Transverse colon (tissue), 4 donors: ENCODE measurements at regions of chr14 and their contacts with region 1.

Region 1: DNA sequence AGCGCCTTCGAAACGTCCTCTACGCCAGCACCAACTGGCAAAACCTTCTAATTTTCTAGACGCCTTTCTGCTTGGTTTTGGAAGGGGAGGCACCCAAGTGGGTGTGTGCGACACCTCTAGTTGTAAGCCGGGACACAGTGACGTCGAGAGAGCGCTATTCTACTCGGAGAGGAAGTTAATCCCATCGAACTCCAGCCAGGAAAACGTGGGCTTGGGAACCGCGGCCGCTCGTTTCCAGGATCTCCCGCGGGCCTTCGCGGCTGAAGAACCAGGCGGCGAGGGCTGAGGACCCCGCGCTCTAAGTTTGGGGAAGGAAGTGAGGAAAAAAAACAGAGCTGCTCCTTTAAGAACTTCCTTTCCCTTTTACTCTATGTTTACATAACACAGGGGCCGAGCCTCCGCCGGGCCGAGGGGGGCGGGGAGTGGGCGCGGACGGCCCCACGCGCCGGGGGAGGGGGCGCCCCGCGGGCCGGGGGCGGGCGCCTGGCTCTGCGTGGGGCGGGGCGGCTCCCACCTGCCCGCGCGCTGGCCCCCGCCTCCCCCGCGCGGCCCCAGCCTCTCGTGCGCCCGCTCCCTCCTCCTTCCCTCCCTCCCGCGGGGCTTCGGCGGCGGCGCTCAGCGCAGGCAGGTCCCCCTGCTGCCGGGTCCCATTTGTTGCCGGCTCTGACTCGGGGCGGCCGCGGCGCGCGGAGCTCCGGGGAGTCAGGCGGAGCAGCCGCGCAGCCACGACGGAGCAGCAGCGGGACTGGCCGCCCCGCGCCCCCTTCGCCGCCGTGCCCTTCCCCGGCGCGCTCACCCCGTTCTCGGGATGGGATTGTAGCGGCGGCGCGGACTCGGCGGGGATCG is at the start of gene PELI2:
- DNase-seq: peak; percentile 81
- H3K4me3 ChIP-seq: peak within 1 kb of the TSS; percentile 59 to 96 (median 71)
- H3K27ac ChIP-seq: peak within 1 kb of the TSS; percentile 91 to 94 (median 93)
- H3K4me1 ChIP-seq: peaks cover 10 to 36% (median 18%) of the 10 kb centered on the region in 4 donors
- H3K27me3 ChIP-seq: no peaks in the 10 kb centered on the region
- CTCF ChIP-seq: peak in 3 of 5 experiments; percentile 13 to 24 (median 15)
- EP300 ChIP-seq: no peak
- POLR2A ChIP-seq: peak; percentile 48
- total RNA-seq, gene PELI2: 4.8 to 29.9 (median 14.7) TPM

Region 2: DNA sequence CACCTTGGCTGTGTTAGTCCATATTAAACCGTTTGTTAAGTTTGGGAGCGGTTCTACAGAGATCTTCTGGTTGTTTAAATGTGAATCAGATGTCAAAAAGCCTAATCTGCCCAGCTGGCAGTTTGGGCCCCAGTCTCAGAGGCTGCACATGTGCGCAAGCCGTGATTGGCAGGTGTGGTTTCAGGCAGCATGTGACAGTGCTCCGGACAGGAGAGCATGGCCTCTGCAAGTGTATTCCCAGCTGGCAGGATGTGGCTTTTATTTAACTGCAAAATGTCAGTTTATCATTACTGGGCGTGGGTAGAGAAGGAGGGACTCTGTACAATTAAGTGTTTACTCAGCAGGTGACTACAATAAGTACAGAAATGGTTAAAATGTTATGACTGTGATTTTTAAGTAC is 77.7 kb after region 1 on chr14:
- in situ Hi-C with region 1: no loop called
- intact Hi-C with region 1: loop called (anchors 2 kb)
- DNase-seq: peak; percentile 37
- H3K4me3 ChIP-seq: no peak overlapping the region
- H3K27ac ChIP-seq: peak overlapping the region; percentile 13 to 47 (median 44)
- H3K4me1 ChIP-seq: peaks cover 19 to 42% (median 25%) of the 10 kb centered on the region in 4 donors
- H3K27me3 ChIP-seq: no peaks in the 10 kb centered on the region
- CTCF ChIP-seq: no peak
- EP300 ChIP-seq: no peak
- POLR2A ChIP-seq: no peak

Region 3: GRCh38 chr14:56237398-56237797 is 119.4 kb after region 1 on chr14:
- in situ Hi-C with region 1: no loop called
- intact Hi-C with region 1: no loop called
- DNase-seq: no peak
- H3K4me3 ChIP-seq: no peak overlapping the region
- H3K27ac ChIP-seq: no peak overlapping the region
- H3K4me1 ChIP-seq: no peaks in the 10 kb centered on the region
- H3K27me3 ChIP-seq: no peaks in the 10 kb centered on the region
- CTCF ChIP-seq: no peak
- EP300 ChIP-seq: no peak
- POLR2A ChIP-seq: no peak